ENCODE measurements at regions of chrX and their contacts with region 1.

Region 1: DNA sequence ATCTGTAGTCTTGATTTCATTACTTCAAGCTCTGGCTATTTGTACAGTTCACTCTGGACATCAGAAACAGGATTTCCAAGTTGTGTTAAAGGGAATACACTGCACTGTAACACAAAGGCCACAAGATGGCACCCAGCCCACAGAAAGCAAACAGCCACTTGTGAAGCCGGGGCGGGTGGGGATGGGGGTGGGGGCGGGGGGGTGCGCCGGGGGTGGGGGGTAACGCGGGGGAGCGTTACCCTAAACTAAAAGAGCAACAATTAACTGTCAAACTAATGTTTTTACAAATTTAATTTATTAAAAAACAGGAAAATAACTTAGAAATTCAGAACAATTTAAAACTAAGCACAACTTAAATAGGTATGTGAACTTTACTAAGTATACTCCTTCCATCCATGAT is 27.3 kb downstream of the PRDX4 start:
- DNase-seq: peak; percentile 10 to 73 (median 28)
- ATAC-seq: peak; percentile 71
- H3K4me3 ChIP-seq: no peak overlapping the region
- H3K4me3 Mint-ChIP-seq: no peak overlapping the region
- H3K27ac ChIP-seq: no peak overlapping the region
- H3K27ac Mint-ChIP-seq: no peak overlapping the region
- H3K4me1 ChIP-seq: no peaks in the 10 kb centered on the region
- H3K4me1 Mint-ChIP-seq: no peaks in the 10 kb centered on the region
- H3K27me3 ChIP-seq: no peaks in the 10 kb centered on the region
- H3K27me3 Mint-ChIP-seq: no peaks in the 10 kb centered on the region
- CTCF ChIP-seq: peak; percentile 20

Region 2: GRCh38 chrX:23616361-23616760 is 78.2 kb before region 1 on chrX:
- CTCF ChIA-PET with region 1: no interaction called
- POLR2A ChIA-PET with region 1: no interaction called
- intact Hi-C with region 1: no loop called
- DNase-seq: peak in 1 of 14 experiments; percentile 6
- ATAC-seq: no peak
- H3K4me3 ChIP-seq: no peak overlapping the region
- H3K4me3 Mint-ChIP-seq: no peak overlapping the region
- H3K27ac ChIP-seq: no peak overlapping the region
- H3K27ac Mint-ChIP-seq: no peak overlapping the region
- H3K4me1 ChIP-seq: no peaks in the 10 kb centered on the region
- H3K4me1 Mint-ChIP-seq: no peaks in the 10 kb centered on the region
- H3K27me3 ChIP-seq: no peaks in the 10 kb centered on the region
- H3K27me3 Mint-ChIP-seq: peaks cover 3% of the 10 kb centered on the region
- CTCF ChIP-seq: peak; percentile 10

Region 3: GRCh38 chrX:23732704-23733103 is 38.1 kb after region 1 on chrX:
- CTCF ChIA-PET with region 1: no interaction called
- POLR2A ChIA-PET with region 1: no interaction called
- intact Hi-C with region 1: no loop called
- DNase-seq: peak in 3 of 14 experiments; percentile 27 to 35 (median 34)
- ATAC-seq: peak; percentile 48
- H3K4me3 ChIP-seq: no peak overlapping the region
- H3K4me3 Mint-ChIP-seq: no peak overlapping the region
- H3K27ac ChIP-seq: no peak overlapping the region
- H3K27ac Mint-ChIP-seq: peak overlapping the region; percentile 81
- H3K4me1 ChIP-seq: no peaks in the 10 kb centered on the region
- H3K4me1 Mint-ChIP-seq: peaks cover 10% of the 10 kb centered on the region
- H3K27me3 ChIP-seq: no peaks in the 10 kb centered on the region
- H3K27me3 Mint-ChIP-seq: no peaks in the 10 kb centered on the region
- CTCF ChIP-seq: no peak

Region 4: GRCh38 chrX:23756157-23756559 is 61.6 kb after region 1 on chrX:
- CTCF ChIA-PET with region 1: no interaction called
- POLR2A ChIA-PET with region 1: no interaction called
- intact Hi-C with region 1: loop called in 1 of 2 experiments (anchors 5 kb)
- DNase-seq: peak; percentile 27 to 80 (median 53)
- ATAC-seq: peak; percentile 62
- H3K4me3 ChIP-seq: no peak overlapping the region
- H3K4me3 Mint-ChIP-seq: no peak overlapping the region
- H3K27ac ChIP-seq: no peak overlapping the region
- H3K27ac Mint-ChIP-seq: no peak overlapping the region
- H3K4me1 ChIP-seq: peaks cover 3% of the 10 kb centered on the region
- H3K4me1 Mint-ChIP-seq: peaks cover 4% of the 10 kb centered on the region
- H3K27me3 ChIP-seq: no peaks in the 10 kb centered on the region
- H3K27me3 Mint-ChIP-seq: no peaks in the 10 kb centered on the region
- CTCF ChIP-seq: peak; percentile 58

Measured in CD4-positive, alpha-beta T cell (primary cell).